AG04450 (cell line): ENCODE measurements at regions of chr5 and their contacts with region 1.

Region 1: GRCh38 chr5:106019261-106019660 is 1651.5 kb downstream of the EFNA5 start:
- DNase-seq: no peak
- H3K4me3 ChIP-seq: no peak overlapping the region
- H3K27ac ChIP-seq: no peak overlapping the region
- H3K27me3 ChIP-seq: no peaks in the 10 kb centered on the region
- CTCF ChIP-seq: no peak

Region 2: DNA sequence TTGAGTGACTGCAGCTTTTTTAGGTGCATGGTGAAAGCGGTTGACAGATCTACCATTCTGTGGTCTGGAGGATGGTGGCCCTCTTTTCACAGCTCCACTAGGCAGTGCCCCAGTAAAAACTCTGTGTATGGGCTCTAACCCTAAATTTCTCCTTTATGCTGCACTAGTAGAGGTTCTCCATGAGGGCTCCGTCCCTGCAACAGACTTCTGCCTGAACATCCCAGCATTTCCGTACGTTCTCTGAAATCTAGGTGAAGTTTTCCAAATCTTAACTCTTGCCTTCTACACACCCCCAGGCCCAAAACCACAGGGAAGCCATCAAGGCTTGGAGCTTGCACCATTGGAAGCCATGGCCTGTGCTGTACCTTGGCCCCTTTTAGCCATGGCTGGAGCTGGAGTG is 558.5 kb before region 1 on chr5:
- CTCF ChIA-PET with region 1: no interaction called
- POLR2A ChIA-PET with region 1: no interaction called
- DNase-seq: no peak
- H3K4me3 ChIP-seq: no peak overlapping the region
- H3K27ac ChIP-seq: no peak overlapping the region
- H3K27me3 ChIP-seq: no peaks in the 10 kb centered on the region
- CTCF ChIP-seq: no peak

Region 3: GRCh38 chr5:105947423-105947822 is 71.8 kb before region 1 on chr5:
- CTCF ChIA-PET with region 1: interaction called, 10 read pairs
- POLR2A ChIA-PET with region 1: no interaction called
- DNase-seq: no peak
- H3K4me3 ChIP-seq: no peak overlapping the region
- H3K27ac ChIP-seq: no peak overlapping the region
- H3K27me3 ChIP-seq: no peaks in the 10 kb centered on the region
- CTCF ChIP-seq: no peak